ENCODE measurements at regions of chr13 and their contacts with region 1.

Region 1: GRCh38 chr13:85512421-85512820 is 286.8 kb downstream of the SLITRK6 start:
- DNase-seq: no peak

Region 2: GRCh38 chr13:85441364-85441763 is 71.1 kb before region 1 on chr13:
- intact Hi-C with region 1: no loop called
- DNase-seq: no peak

Region 3: DNA sequence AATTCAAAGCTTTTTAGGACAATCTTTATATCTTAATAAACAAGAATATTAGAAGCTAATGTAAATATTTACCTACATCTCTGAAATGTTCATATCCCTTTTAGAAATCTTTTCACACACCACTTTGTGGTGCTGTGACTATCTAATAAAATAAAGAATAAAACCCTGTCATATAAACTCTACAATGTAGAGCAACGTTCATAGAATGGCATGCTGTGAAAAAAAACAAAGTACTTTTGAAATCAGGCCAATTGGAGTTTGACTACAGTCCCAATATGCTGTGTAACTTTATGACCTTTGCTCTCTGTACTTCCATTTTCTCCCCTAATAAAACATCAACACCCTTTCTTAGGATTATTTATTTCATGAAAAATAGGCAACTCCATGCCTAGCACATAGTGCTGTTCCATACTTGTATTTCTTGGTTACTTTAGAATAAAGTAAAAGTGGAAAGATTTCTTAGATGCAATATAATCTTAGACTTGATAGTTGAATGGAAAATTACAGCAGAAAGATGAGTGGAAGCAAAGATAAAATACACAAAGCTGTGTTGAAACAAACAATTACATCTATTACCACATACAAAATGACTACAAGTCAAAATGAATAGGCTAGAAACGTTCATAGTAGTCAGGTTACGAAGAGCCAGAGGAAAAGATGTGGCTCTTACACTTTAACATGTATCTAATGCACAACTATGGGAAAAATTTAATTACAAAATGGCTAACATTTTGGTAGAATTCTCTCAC is 1545.5 kb after region 1 on chr13:
- intact Hi-C with region 1: loop called in 1 of 2 experiments (anchors 10 kb)
- DNase-seq: no peak

Measured in posterior vena cava (tissue), 2 donors.